H1 (cell line): ENCODE measurements at regions of chr5 and their contacts with region 1.

Region 1: GRCh38 chr5:43389679-43390329 is 22.4 kb downstream of the CCL28 start:
- DNase-seq: peak; percentile 46 to 50
- H3K4me3 ChIP-seq: no peak overlapping the region
- H3K27ac ChIP-seq: no peak overlapping the region
- H3K4me1 ChIP-seq: no peaks in the 10 kb centered on the region
- H3K27me3 ChIP-seq: peaks cover 0 to 1% (median 0%) of the 10 kb centered on the region in 4 experiments; a peak in 1 of 7 replicates
- CTCF ChIP-seq: peak in 2 of 3 experiments; percentile 82 to 84; a peak in 3 of 4 replicates
- EP300 ChIP-seq: no peak
- POLR2A ChIP-seq: no peak
- RAD21 ChIP-seq: peak; percentile 88 to 91

Region 2: DNA sequence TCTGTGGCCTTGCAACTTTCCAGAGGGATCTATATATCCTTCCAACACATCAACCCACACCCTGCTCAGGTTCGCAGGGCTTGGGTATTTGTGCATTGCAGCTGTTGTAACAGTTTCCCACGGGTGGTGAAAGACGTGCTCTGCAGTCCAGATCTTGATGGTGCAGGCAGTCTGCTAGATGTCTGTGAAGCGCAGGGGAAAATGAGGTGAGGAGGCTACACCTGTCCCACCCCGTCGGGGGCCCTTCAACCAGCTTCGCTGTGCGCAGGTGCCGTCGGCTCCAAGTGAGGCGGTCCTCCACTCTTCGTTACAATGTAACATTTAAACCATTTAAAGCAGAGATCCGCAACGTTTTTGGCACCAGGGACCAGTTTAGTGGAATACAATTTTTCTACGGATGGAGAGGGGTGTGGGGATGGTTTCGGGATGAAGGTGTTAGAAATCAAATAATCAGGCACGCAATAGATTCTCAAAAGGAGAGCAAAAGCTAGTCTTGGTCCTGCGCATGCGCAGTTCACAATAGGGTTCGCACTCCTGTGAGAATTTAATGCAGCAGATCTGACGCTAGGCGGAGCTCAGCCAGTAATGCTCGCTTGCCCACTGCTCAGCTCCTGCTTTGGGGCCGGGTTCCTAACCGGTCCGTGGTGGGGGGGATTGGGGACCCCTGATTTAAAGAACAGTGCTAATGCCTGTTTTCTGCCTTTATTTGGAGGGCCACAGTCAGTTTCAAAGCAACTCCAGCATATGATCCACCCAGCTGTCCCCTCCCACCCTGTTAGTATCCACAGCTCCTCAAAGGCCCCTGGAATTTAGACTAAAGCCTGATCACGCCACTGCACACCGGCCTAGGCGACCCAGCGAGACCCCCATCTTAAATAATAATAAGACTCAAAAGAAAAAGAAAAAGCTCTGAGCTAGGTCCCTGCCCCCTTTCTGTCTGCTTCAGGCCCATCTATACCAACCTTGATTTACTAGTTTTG is 481.0 kb before region 1 on chr5:
- CTCF ChIA-PET with region 1: no interaction called
- POLR2A ChIA-PET with region 1: no interaction called
- DNase-seq: peak; percentile 47 to 88
- H3K4me3 ChIP-seq: peak overlapping the region; percentile 49 to 66 (median 55); a peak in 7 of 8 replicates
- H3K27ac ChIP-seq: no peak overlapping the region
- H3K4me1 ChIP-seq: no peaks in the 10 kb centered on the region; a peak in 1 of 7 replicates
- H3K27me3 ChIP-seq: peaks cover 0 to 12% (median 8%) of the 10 kb centered on the region in 4 experiments; a peak in 6 of 7 replicates
- CTCF ChIP-seq: peak; percentile 74 to 92 (median 89)
- EP300 ChIP-seq: no peak
- POLR2A ChIP-seq: no peak
- RAD21 ChIP-seq: peak; percentile 68 to 77

Region 3: DNA sequence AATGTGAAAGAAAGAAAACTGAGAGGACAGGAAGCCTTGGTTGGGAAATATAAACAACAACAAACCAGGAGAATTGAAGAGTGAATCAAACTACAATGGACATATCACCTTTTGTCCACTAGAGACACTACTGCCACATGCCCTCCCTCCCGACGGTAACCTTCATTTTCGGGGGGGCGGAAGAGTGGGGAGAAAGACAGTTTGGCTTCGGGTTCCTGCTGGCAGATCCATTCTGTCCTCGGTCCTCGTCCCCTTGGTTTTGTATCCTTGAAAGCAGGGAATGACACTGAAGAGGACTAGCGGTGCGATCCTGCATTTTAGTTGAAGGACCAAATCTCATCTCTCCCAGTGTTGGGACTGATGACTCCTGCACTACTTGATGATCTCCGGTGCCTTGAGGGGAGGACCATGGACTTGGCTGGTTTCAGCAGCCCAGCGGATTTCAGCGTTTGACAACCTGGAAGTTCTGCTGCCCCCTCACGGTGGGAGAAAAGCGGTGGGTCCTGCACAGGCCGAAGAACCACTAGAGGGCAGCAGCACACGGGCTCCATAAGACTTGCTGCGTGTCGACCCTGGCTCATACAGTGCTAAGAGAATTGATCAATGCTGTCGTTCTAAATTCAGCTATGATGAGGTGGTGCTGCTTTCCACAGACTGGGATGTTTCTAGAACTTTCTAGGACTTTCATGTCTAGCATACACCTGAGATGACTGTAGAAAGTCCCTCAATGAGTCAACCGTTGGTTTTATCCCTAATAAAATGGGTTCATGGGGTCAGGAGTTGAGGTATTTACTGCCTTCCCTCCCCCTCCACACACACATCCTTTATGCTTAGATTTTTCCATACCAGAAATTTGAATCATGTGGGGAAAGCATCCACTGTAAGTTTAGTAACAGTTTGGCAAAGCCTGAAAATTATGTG is 284.2 kb before region 1 on chr5:
- CTCF ChIA-PET with region 1: interaction called, 14 read pairs
- POLR2A ChIA-PET with region 1: no interaction called
- DNase-seq: peak; percentile 91 to 93
- H3K4me3 ChIP-seq: peak overlapping the region in 1 of 4 experiments; percentile 39; a peak in 1 of 8 replicates
- H3K27ac ChIP-seq: no peak overlapping the region
- H3K4me1 ChIP-seq: no peaks in the 10 kb centered on the region
- H3K27me3 ChIP-seq: no peaks in the 10 kb centered on the region
- CTCF ChIP-seq: peak; percentile 98 to 100 (median 100)
- EP300 ChIP-seq: no peak
- POLR2A ChIP-seq: no peak
- RAD21 ChIP-seq: peak; percentile 80 to 86

Region 4: GRCh38 chr5:43210570-43210969 is 179.2 kb before region 1 on chr5:
- CTCF ChIA-PET with region 1: interaction called, 10 read pairs
- POLR2A ChIA-PET with region 1: no interaction called
- DNase-seq: no peak
- H3K4me3 ChIP-seq: no peak overlapping the region
- H3K27ac ChIP-seq: no peak overlapping the region
- H3K4me1 ChIP-seq: peaks cover 0 to 4% (median under 1%) of the 10 kb centered on the region in 4 experiments; a peak in 3 of 7 replicates
- H3K27me3 ChIP-seq: no peaks in the 10 kb centered on the region
- CTCF ChIP-seq: no peak
- EP300 ChIP-seq: no peak
- POLR2A ChIP-seq: no peak
- RAD21 ChIP-seq: no peak

Region 5: GRCh38 chr5:43233946-43234345 is 155.9 kb before region 1 on chr5:
- CTCF ChIA-PET with region 1: interaction called, 46 read pairs
- POLR2A ChIA-PET with region 1: no interaction called
- DNase-seq: no peak
- H3K4me3 ChIP-seq: no peak overlapping the region
- H3K27ac ChIP-seq: no peak overlapping the region
- H3K4me1 ChIP-seq: no peaks in the 10 kb centered on the region
- H3K27me3 ChIP-seq: no peaks in the 10 kb centered on the region
- CTCF ChIP-seq: no peak
- EP300 ChIP-seq: no peak
- POLR2A ChIP-seq: no peak
- RAD21 ChIP-seq: no peak

Region 6: GRCh38 chr5:43313035-43313853 is 76.6 kb before region 1 on chr5 and contains the start of gene HMGCS1:
- CTCF ChIA-PET with region 1: interaction called, 12 read pairs
- POLR2A ChIA-PET with region 1: no interaction called
- DNase-seq: peak; percentile 94 to 99
- H3K4me3 ChIP-seq: peak within 1 kb of the TSS; percentile 63 to 93 (median 90)
- H3K27ac ChIP-seq: peak within 1 kb of the TSS; percentile 81
- H3K4me1 ChIP-seq: peaks cover 0 to 14% (median 10%) of the 10 kb centered on the region in 4 experiments; a peak in 6 of 7 replicates
- H3K27me3 ChIP-seq: no peaks in the 10 kb centered on the region
- CTCF ChIP-seq: no peak
- EP300 ChIP-seq: no peak; a peak in 1 of 3 replicates
- POLR2A ChIP-seq: peak; percentile 46 to 71; a peak in 2 of 3 replicates
- RAD21 ChIP-seq: no peak
- total RNA-seq, gene HMGCS1: 230 and 236 TPM in 2 replicates

Region 7: DNA sequence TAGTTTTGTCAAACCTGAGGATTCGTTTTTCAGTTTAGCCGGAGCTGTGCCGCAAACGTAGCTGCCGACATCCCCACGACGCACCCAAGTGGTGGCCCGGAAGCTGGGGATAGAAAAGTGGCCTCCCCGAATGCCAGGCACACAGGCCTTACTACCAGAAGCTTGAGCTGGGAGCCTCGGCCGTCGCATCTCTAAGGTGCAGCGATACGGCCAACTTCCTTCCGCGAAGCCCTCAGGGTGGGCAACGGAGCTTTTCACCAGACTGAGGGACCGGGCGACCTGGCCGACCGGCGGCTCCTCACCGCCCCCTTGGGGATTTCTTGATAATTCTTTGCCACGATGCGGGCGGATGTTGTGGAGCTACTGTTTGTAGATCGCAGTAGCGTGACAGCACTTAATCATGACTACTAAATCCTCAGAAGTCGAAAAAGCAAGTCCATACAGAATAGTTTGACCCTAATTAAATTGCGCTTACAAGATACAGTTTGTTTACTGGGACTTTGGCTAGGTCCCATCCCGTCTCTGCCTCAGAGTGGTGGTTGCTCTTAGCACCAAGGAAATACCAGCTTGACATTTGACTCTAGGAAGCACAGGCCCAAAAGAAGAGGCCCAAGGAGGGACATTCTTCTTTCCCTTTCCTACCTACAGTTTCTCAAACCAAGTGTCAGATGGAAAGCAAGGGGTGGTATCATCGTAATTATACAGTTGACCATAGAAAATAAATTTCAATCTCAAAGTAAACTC is 94.5 kb after region 1 on chr5:
- CTCF ChIA-PET with region 1: interaction called, 16 read pairs
- POLR2A ChIA-PET with region 1: no interaction called
- DNase-seq: peak; percentile 47 to 88
- H3K4me3 ChIP-seq: peak overlapping the region; percentile 68 to 91 (median 89)
- H3K27ac ChIP-seq: peak overlapping the region; percentile 92
- H3K4me1 ChIP-seq: no peaks in the 10 kb centered on the region; a peak in 2 of 7 replicates
- H3K27me3 ChIP-seq: no peaks in the 10 kb centered on the region
- CTCF ChIP-seq: peak; percentile 61 to 66 (median 63)
- EP300 ChIP-seq: no peak
- POLR2A ChIP-seq: peak; percentile 2 to 46; a peak in 2 of 3 replicates
- RAD21 ChIP-seq: peak; percentile 64